ENCODE measurements at regions of chr7 and their contacts with region 1.

Region 1: GRCh38 chr7:88789480-88790064 is 6.0 kb downstream of the TEX47 start:
- DNase-seq: peak; percentile 2
- ATAC-seq: no peak
- H3K4me3 ChIP-seq: no peak overlapping the region
- H3K27ac ChIP-seq: no peak overlapping the region
- H3K4me1 ChIP-seq: no peaks in the 10 kb centered on the region
- H3K27me3 ChIP-seq: no peaks in the 10 kb centered on the region
- CTCF ChIP-seq: peak; percentile 39
- POLR2A ChIP-seq: no peak
- RAD21 ChIP-seq: peak; percentile 8; the same call in 1 of the 2 replicates

Region 2: DNA sequence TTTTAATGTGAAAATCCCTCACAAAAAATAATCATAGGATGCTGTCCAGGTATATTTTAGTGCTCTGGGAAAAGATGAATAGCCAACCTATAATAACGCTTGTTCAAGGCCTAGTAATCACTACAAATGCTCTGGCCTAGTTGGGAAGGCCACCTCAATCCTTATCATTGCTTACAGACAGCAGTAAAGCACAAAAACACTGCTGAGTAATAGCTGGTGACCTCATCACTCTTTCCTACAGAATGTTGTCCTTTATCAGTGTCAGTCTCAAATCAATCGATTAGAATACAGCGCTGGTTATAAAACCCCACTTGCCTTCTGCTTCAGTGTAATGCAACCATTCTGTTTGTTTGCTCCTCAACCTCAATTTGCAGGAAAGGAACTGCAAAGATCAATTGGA is 1292.0 kb after region 1 on chr7:
- CTCF ChIA-PET with region 1: no interaction called
- POLR2A ChIA-PET with region 1: no interaction called
- dilution Hi-C with region 1: no loop called
- in situ Hi-C with region 1: loop called (anchors 25 kb)
- intact Hi-C with region 1: no loop called
- DNase-seq: no peak
- ATAC-seq: no peak
- H3K4me3 ChIP-seq: no peak overlapping the region
- H3K27ac ChIP-seq: no peak overlapping the region
- H3K4me1 ChIP-seq: no peaks in the 10 kb centered on the region
- H3K27me3 ChIP-seq: no peaks in the 10 kb centered on the region
- CTCF ChIP-seq: no peak
- POLR2A ChIP-seq: no peak
- RAD21 ChIP-seq: no peak

Region 3: GRCh38 chr7:90119178-90119971 is 1329.8 kb after region 1 on chr7:
- CTCF ChIA-PET with region 1: no interaction called
- POLR2A ChIA-PET with region 1: no interaction called
- dilution Hi-C with region 1: no loop called
- in situ Hi-C with region 1: no loop called
- intact Hi-C with region 1: loop called (anchors 5 kb)
- DNase-seq: peak; percentile 1
- ATAC-seq: peak; percentile 24; the same call in 1 of the 2 replicates
- H3K4me3 ChIP-seq: peak overlapping the region; percentile 26
- H3K27ac ChIP-seq: no peak overlapping the region
- H3K4me1 ChIP-seq: no peaks in the 10 kb centered on the region
- H3K27me3 ChIP-seq: peaks cover 12% of the 10 kb centered on the region
- CTCF ChIP-seq: no peak
- POLR2A ChIP-seq: no peak
- RAD21 ChIP-seq: no peak

Region 4: DNA sequence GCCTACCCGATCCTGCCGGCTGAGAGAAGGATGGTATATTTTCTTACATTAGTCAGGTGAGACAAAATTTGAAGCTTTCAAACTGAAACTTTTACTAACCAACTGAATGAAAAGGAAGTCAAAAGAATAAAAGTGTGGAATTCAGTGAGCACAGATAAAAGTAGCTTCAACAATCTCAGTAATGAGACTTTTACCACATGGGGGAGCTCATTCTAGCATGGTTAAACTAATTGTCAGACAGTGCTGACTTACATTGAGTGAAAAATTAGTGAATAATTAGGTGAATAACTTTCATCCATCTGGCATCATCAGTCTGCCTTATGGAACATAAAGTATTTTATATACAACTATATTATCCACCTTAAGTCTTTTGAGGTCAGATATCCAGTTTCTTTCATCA is 1523.2 kb after region 1 on chr7:
- CTCF ChIA-PET with region 1: no interaction called
- POLR2A ChIA-PET with region 1: no interaction called
- dilution Hi-C with region 1: no loop called
- in situ Hi-C with region 1: loop called (anchors 25 kb)
- intact Hi-C with region 1: no loop called
- DNase-seq: no peak
- ATAC-seq: no peak
- H3K4me3 ChIP-seq: no peak overlapping the region
- H3K27ac ChIP-seq: no peak overlapping the region
- H3K4me1 ChIP-seq: no peaks in the 10 kb centered on the region
- H3K27me3 ChIP-seq: peaks cover 1% of the 10 kb centered on the region; the same call in 1 of the 2 replicates
- CTCF ChIP-seq: peak; percentile 28
- POLR2A ChIP-seq: no peak
- RAD21 ChIP-seq: peak; percentile 18; the same call in 1 of the 2 replicates